GM12878 (cell line): ENCODE measurements at regions of chr13 and their contacts with region 1.

Region 1: GRCh38 chr13:103031332-103031873 is 34.8 kb downstream of the SLC10A2 start:
- DNase-seq: peak; percentile 90
- ATAC-seq: peak; percentile 93
- H3K4me3 ChIP-seq: no peak overlapping the region
- H3K27ac ChIP-seq: peak overlapping the region; percentile 79
- H3K4me1 ChIP-seq: peaks cover 38% of the 10 kb centered on the region
- H3K27me3 ChIP-seq: no peaks in the 10 kb centered on the region
- CTCF ChIP-seq: no peak
- EP300 ChIP-seq: peak; percentile 95 to 99
- POLR2A ChIP-seq: no peak
- RAD21 ChIP-seq: peak; percentile 19

Region 2: GRCh38 chr13:102970542-102970941 is 60.9 kb before region 1 on chr13:
- CTCF ChIA-PET with region 1: no interaction called
- POLR2A ChIA-PET with region 1: no interaction called
- RAD21 ChIA-PET with region 1: interaction called, 3 read pairs
- SMC1A ChIA-PET with region 1: interaction called, 8 read pairs
- in situ Hi-C with region 1: no loop called
- intact Hi-C with region 1: loop called (anchors 5 kb)
- DNase-seq: peak; percentile 92
- ATAC-seq: peak; percentile 94
- H3K4me3 ChIP-seq: no peak overlapping the region
- H3K27ac ChIP-seq: peak overlapping the region; percentile 69
- H3K4me1 ChIP-seq: peaks cover 26% of the 10 kb centered on the region
- H3K27me3 ChIP-seq: no peaks in the 10 kb centered on the region
- CTCF ChIP-seq: no peak
- EP300 ChIP-seq: peak; percentile 51 to 83; a peak in 2 of 4 replicates
- POLR2A ChIP-seq: no peak
- RAD21 ChIP-seq: peak; percentile 19; the same call in 1 of the 2 replicates

Region 3: DNA sequence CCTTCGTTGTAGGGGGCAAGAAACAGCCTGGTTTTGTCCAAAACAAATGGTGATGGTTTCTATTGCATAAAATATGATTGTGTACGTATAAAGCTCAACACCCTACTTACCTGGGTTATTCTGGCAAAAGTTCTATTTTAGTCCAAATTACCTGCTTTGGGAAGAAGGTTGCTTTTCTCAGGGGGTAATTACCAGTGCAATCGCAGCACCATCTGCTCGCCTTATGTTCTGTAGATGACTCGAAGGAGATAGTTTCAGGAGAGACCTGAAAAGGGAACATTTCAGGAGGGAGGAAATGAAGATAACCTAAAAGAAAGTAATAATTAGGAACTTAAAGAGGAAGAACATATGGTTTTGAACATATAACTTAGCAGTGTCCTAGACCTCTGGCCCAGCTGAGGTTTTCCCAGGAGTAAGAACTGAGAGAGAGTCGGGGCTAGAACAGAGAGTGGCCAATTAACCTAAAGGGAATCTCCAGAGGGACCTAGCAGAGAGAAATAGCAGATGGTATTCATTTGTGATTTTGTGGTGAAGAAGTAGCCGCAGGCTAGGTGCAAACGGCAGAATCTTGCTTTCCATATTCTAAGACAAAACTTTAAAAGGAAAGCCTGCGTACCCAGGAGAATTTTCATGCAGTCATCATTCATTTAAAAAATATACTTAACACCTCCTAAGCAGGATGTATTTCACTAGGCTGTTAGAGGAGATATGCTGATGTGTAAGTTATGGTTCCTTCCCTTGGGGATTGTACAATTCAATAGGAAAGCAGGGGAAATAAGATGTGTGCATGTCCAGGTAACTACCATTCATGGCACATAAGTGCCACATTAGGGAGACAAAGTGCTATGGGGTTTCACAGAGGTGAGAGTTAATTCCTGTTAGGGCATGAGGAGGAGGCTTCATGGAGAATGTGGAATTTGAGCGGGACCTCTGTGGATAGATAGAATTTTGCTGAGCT is 147.9 kb after region 1 on chr13:
- CTCF ChIA-PET with region 1: no interaction called
- POLR2A ChIA-PET with region 1: no interaction called
- RAD21 ChIA-PET with region 1: no interaction called
- SMC1A ChIA-PET with region 1: no interaction called
- in situ Hi-C with region 1: no loop called
- intact Hi-C with region 1: loop called (anchors 1 kb)
- DNase-seq: peak; percentile 46
- ATAC-seq: peak; percentile 87
- H3K4me3 ChIP-seq: no peak overlapping the region
- H3K27ac ChIP-seq: no peak overlapping the region
- H3K4me1 ChIP-seq: peaks cover 10% of the 10 kb centered on the region
- H3K27me3 ChIP-seq: no peaks in the 10 kb centered on the region
- CTCF ChIP-seq: no peak
- EP300 ChIP-seq: peak in 1 of 2 experiments; percentile 60; a peak in 3 of 4 replicates
- POLR2A ChIP-seq: no peak
- RAD21 ChIP-seq: no peak